Gastrocnemius medialis (tissue), 4 donors: ENCODE measurements at regions of chr7 and their contacts with region 1.

Region 1: GRCh38 chr7:974820-975681 is at the start of gene COX19:
- DNase-seq: peak; percentile 77 to 83
- ATAC-seq: peak; percentile 93 to 94
- H3K4me3 ChIP-seq: peak within 1 kb of the TSS; percentile 88 to 100 (median 96)
- H3K27ac ChIP-seq: peak within 1 kb of the TSS; percentile 92 to 98 (median 96)
- H3K4me1 ChIP-seq: peaks cover 15 to 18% of the 10 kb centered on the region in 2 donors
- H3K27me3 ChIP-seq: no peaks in the 10 kb centered on the region
- CTCF ChIP-seq: no peak
- POLR2A ChIP-seq: peak; percentile 60 to 81
- total RNA-seq, gene COX19: 4.7 to 6.5 (median 5.2) TPM

Region 2: GRCh38 chr7:1028031-1028770 is 53.1 kb after region 1 on chr7:
- in situ Hi-C with region 1: no loop called
- intact Hi-C with region 1: loop called (anchors 1 kb)
- DNase-seq: peak; percentile 76 to 85
- ATAC-seq: peak; percentile 81 to 88
- H3K4me3 ChIP-seq: peak overlapping the region; percentile 62 to 91 (median 74)
- H3K27ac ChIP-seq: peak overlapping the region; percentile 93 to 98 (median 97)
- H3K4me1 ChIP-seq: peaks cover 21 to 29% of the 10 kb centered on the region in 2 donors
- H3K27me3 ChIP-seq: no peaks in the 10 kb centered on the region
- CTCF ChIP-seq: no peak
- POLR2A ChIP-seq: peak; percentile 63 to 69